GM12878 (cell line): ENCODE measurements at regions of chr6 and their contacts with region 1.

Region 1: DNA sequence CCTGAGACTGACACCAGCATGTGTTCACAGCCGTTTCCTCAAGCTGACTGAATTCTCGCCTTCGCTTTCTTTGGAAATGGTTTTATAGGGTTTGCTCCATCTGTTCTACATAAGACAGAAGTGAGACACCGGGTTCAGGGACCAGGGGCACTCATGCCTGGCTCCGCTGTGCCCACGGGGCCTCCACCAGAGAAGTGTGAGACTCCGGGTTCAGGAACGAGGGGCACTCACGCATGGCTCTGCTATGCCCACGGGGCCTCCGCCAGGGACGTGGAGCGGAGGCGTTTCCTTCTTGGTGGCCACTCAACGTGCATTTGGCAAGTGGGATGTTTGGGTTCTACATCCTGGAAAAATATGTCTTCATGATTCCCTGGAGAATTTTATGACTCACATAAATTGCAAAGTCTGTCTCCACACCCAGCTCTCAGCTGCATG is 106.6 kb downstream of the RNASET2 start:
- DNase-seq: peak; percentile 65
- ATAC-seq: peak; percentile 91
- H3K4me3 ChIP-seq: no peak overlapping the region
- H3K27ac ChIP-seq: peak overlapping the region; percentile 8; the same call in 1 of the 2 replicates
- H3K4me1 ChIP-seq: peaks cover 23% of the 10 kb centered on the region
- H3K27me3 ChIP-seq: no peaks in the 10 kb centered on the region
- CTCF ChIP-seq: no peak
- EP300 ChIP-seq: no peak
- POLR2A ChIP-seq: no peak
- RAD21 ChIP-seq: no peak

Region 2: DNA sequence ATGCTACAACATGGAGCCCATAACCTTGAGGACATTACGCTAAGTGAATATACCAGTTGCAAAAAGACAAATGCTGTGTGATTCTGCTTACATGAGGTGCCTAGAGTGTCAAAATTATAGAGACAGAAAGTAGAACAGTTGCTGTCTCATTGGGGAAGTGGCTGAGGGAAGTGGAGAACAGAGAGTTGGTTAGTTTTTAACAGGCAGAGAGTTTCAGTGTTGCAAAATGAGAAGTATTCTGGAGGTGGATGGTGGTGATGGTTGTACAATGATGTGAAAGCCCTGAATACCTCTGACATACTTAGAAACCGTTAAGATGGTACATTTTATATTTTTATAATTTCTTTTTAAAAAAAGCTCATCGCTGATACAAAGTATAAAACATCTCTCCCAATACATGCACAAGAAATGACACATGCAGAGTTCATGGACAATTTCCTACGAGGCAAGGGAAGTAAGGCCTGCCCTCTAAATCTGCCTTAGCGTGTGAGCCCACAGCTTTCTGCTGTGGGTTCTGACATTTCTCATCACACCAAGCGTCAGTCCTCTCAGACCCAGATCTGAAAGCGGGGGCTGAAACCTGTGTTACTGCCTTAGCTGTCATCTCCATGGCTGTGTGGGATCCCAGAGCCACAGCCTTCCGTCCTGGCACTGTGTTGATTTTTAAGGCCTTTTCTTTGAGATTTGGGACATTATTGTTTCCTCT is 19.4 kb before region 1 on chr6:
- CTCF ChIA-PET with region 1: interaction called, 6 read pairs
- POLR2A ChIA-PET with region 1: no interaction called
- RAD21 ChIA-PET with region 1: no interaction called
- SMC1A ChIA-PET with region 1: interaction called, 4 read pairs
- in situ Hi-C with region 1: no loop called
- intact Hi-C with region 1: loop called (anchors 2 kb)
- DNase-seq: peak; percentile 80
- ATAC-seq: peak; percentile 94
- H3K4me3 ChIP-seq: peak overlapping the region; percentile 3; the same call in 1 of the 2 replicates
- H3K27ac ChIP-seq: peak overlapping the region; percentile 99
- H3K4me1 ChIP-seq: peaks cover 19% of the 10 kb centered on the region
- H3K27me3 ChIP-seq: no peaks in the 10 kb centered on the region
- CTCF ChIP-seq: no peak
- EP300 ChIP-seq: peak; percentile 28 to 35; a peak in 2 of 4 replicates
- POLR2A ChIP-seq: no peak; the same call in 1 of the 2 replicates
- RAD21 ChIP-seq: no peak

Region 3: DNA sequence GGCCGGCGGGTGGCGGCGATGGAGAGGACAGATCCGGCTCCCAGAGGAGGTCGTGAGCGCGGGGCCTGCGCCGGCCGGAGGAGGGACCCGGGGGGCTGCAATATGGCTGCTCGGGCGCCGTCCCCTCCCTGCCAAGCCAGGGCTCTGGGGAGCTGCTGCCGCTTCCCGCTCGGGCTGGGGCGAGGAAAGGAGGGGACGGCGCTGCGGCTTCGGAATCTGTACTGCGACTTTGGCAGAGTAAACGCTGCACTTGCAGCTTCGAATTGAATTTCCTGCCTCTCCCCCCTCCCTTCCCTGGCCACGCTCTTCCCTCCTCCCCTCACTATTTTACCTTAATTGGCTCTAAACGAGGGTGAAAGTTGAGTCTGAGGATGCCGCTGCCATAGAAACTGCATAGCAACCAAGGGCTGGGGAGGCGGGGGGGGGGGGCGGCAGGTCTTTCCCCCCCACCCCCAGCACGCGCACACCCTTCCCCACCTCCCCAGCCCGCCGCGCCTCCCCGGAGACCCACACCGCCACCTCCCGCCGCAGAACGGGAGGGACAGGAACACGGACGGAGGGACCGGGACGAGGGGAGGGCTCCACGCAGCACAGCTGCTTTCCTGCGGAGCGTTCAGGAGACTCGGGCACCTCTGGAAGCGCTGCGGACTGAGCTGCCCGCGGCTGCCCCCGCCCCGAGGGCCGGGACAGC is 12.7 kb after region 1 on chr6:
- CTCF ChIA-PET with region 1: interaction called, 3 read pairs
- POLR2A ChIA-PET with region 1: interaction called, 3 read pairs
- RAD21 ChIA-PET with region 1: no interaction called
- SMC1A ChIA-PET with region 1: interaction called, 12 read pairs
- in situ Hi-C with region 1: no loop called
- intact Hi-C with region 1: no loop called
- DNase-seq: no peak
- ATAC-seq: peak; percentile 76
- H3K4me3 ChIP-seq: peak overlapping the region; percentile 77
- H3K27ac ChIP-seq: no peak overlapping the region
- H3K4me1 ChIP-seq: no peaks in the 10 kb centered on the region; the same call in 1 of the 2 replicates
- H3K27me3 ChIP-seq: no peaks in the 10 kb centered on the region; a peak in 1 of 4 replicates
- CTCF ChIP-seq: peak; percentile 19 to 33 (median 30); a peak in 3 of 6 replicates
- EP300 ChIP-seq: no peak
- POLR2A ChIP-seq: no peak
- RAD21 ChIP-seq: peak; percentile 51